H1 (cell line): ENCODE measurements at regions of chr1 and their contacts with region 1.

Region 1: GRCh38 chr1:94335950-94336349 is 82.2 kb upstream of the ABCD3 start:
- DNase-seq: no peak
- H3K4me3 ChIP-seq: no peak overlapping the region
- H3K27ac ChIP-seq: no peak overlapping the region
- H3K4me1 ChIP-seq: peaks cover 0 to 7% (median 0%) of the 10 kb centered on the region in 4 experiments; a peak in 1 of 7 replicates
- H3K27me3 ChIP-seq: no peaks in the 10 kb centered on the region
- CTCF ChIP-seq: peak in 2 of 3 experiments; percentile 87 to 98; a peak in 3 of 4 replicates
- EP300 ChIP-seq: no peak
- POLR2A ChIP-seq: no peak
- RAD21 ChIP-seq: peak; percentile 99 to 100

Region 2: GRCh38 chr1:93779540-93780192 is 556.3 kb before region 1 on chr1:
- CTCF ChIA-PET with region 1: no interaction called
- POLR2A ChIA-PET with region 1: no interaction called
- DNase-seq: peak in 1 of 2 experiments; percentile 36
- H3K4me3 ChIP-seq: no peak overlapping the region
- H3K27ac ChIP-seq: no peak overlapping the region
- H3K4me1 ChIP-seq: peaks cover 0 to 4% (median 1%) of the 10 kb centered on the region in 4 experiments; a peak in 1 of 7 replicates
- H3K27me3 ChIP-seq: no peaks in the 10 kb centered on the region
- CTCF ChIP-seq: no peak
- EP300 ChIP-seq: no peak
- POLR2A ChIP-seq: no peak
- RAD21 ChIP-seq: no peak

Region 3: GRCh38 chr1:94061513-94062443 is 274.2 kb before region 1 on chr1:
- CTCF ChIA-PET with region 1: interaction called, 410 read pairs
- POLR2A ChIA-PET with region 1: interaction called, 4 read pairs
- DNase-seq: peak in 1 of 2 experiments; percentile 79
- H3K4me3 ChIP-seq: no peak overlapping the region
- H3K27ac ChIP-seq: no peak overlapping the region
- H3K4me1 ChIP-seq: peaks cover 0 to 4% (median 1%) of the 10 kb centered on the region in 4 experiments; a peak in 1 of 7 replicates
- H3K27me3 ChIP-seq: peaks cover 1 to 17% (median 10%) of the 10 kb centered on the region in 4 experiments; a peak in 6 of 7 replicates
- CTCF ChIP-seq: peak; percentile 79 to 95 (median 93)
- EP300 ChIP-seq: no peak
- POLR2A ChIP-seq: no peak
- RAD21 ChIP-seq: peak; percentile 95 to 96

Region 4: GRCh38 chr1:94228640-94229375 is 107.1 kb before region 1 on chr1:
- CTCF ChIA-PET with region 1: interaction called, 15 read pairs
- POLR2A ChIA-PET with region 1: no interaction called
- DNase-seq: no peak
- H3K4me3 ChIP-seq: no peak overlapping the region
- H3K27ac ChIP-seq: no peak overlapping the region
- H3K4me1 ChIP-seq: no peaks in the 10 kb centered on the region
- H3K27me3 ChIP-seq: no peaks in the 10 kb centered on the region
- CTCF ChIP-seq: no peak
- EP300 ChIP-seq: no peak
- POLR2A ChIP-seq: no peak
- RAD21 ChIP-seq: no peak

Region 5: DNA sequence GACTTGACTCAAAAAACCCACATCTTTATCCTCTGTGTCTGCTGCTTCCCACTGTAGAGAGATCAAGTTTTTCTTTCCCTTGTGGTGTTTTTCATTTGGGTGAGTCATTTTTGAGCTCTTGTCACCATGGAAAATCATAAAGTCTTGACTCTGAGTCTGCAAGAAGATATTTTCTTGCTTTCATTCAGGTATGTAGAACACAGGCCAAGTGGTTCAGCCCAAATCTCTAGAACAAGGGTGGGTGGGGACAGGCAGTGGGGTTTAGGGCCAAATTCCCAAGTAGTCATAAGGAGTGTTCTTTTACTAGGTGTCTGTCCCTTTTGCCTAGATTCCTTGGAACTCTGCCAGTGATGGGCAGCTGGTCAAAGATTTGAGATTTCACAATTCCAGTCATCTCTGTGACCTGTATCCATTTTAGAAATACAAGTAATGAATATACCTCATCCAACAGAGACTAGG is 77.0 kb before region 1 on chr1:
- CTCF ChIA-PET with region 1: interaction called, 56 read pairs
- POLR2A ChIA-PET with region 1: no interaction called
- DNase-seq: no peak
- H3K4me3 ChIP-seq: no peak overlapping the region
- H3K27ac ChIP-seq: no peak overlapping the region
- H3K4me1 ChIP-seq: peaks cover 0 to 5% (median 2%) of the 10 kb centered on the region in 4 experiments; a peak in 2 of 7 replicates
- H3K27me3 ChIP-seq: peaks cover 39 to 75% (median 60%) of the 10 kb centered on the region in 4 experiments
- CTCF ChIP-seq: no peak
- EP300 ChIP-seq: no peak
- POLR2A ChIP-seq: no peak
- RAD21 ChIP-seq: no peak

Region 6: GRCh38 chr1:94316836-94317789 is 18.8 kb before region 1 on chr1:
- CTCF ChIA-PET with region 1: interaction called, 26 read pairs
- POLR2A ChIA-PET with region 1: no interaction called
- DNase-seq: no peak
- H3K4me3 ChIP-seq: no peak overlapping the region
- H3K27ac ChIP-seq: no peak overlapping the region
- H3K4me1 ChIP-seq: peaks cover 0 to 3% (median under 1%) of the 10 kb centered on the region in 4 experiments; a peak in 3 of 7 replicates
- H3K27me3 ChIP-seq: no peaks in the 10 kb centered on the region
- CTCF ChIP-seq: no peak
- EP300 ChIP-seq: no peak
- POLR2A ChIP-seq: no peak
- RAD21 ChIP-seq: no peak

Region 7: GRCh38 chr1:94425821-94426484 is 90.0 kb after region 1 on chr1:
- CTCF ChIA-PET with region 1: no interaction called
- POLR2A ChIA-PET with region 1: no interaction called
- DNase-seq: no peak
- H3K4me3 ChIP-seq: no peak overlapping the region
- H3K27ac ChIP-seq: no peak overlapping the region
- H3K4me1 ChIP-seq: peaks cover 0 to 4% (median 0%) of the 10 kb centered on the region in 4 experiments; a peak in 2 of 7 replicates
- H3K27me3 ChIP-seq: no peaks in the 10 kb centered on the region
- CTCF ChIP-seq: no peak
- EP300 ChIP-seq: no peak
- POLR2A ChIP-seq: no peak
- RAD21 ChIP-seq: no peak

Region 8: GRCh38 chr1:94463765-94464330 is 127.9 kb after region 1 on chr1:
- CTCF ChIA-PET with region 1: interaction called, 29 read pairs
- POLR2A ChIA-PET with region 1: no interaction called
- DNase-seq: no peak
- H3K4me3 ChIP-seq: no peak overlapping the region
- H3K27ac ChIP-seq: no peak overlapping the region
- H3K4me1 ChIP-seq: no peaks in the 10 kb centered on the region
- H3K27me3 ChIP-seq: no peaks in the 10 kb centered on the region
- CTCF ChIP-seq: peak in 2 of 3 experiments; percentile 30 to 43; a peak in 2 of 4 replicates
- EP300 ChIP-seq: no peak
- POLR2A ChIP-seq: no peak
- RAD21 ChIP-seq: peak; percentile 69 to 73